ENCODE measurements at regions of chr11 and their contacts with region 1.

Region 1: DNA sequence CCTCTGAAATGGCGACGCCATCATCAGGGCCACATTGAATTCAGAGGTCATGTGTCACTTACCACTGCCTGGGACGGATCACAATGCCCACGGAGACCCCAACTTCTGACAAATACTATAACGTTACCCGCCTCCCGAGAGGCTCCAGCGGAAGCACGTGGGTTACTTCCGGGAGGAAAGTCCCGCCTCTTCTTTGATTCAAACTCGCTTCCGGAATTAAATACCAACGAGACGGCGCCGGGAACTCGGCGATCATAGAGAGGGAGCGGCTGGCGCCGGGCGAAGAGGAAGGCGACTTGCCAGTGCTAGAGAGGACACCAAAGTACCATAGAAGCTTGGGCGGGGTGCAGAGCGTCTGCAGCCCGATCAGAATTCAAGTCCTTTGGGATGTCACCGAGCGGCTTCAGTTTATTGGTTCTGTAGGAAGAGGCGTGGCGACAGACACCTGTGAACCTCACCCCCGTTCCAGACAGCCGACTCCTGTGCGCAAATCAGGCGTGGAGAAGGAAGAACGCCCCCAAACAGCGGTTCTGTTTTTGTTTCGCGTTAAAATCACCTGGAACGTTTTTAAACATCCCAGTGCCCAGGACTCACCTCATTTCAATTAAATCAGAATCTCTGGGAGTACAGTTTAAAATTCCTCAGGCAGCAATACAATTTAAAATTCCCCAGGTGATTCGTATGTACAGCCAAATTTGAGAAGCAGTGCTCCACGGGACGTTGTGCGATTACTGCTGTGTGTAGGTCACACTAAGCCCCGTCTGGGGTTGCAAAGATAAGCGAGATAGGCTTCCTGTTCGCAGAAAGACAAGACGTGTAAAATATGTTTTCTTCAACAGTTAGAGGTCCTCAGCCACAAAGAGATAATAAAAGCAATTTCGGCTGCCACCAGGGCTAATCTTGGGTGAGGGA is at the start of gene TIMM10:
- DNase-seq: peak; percentile 91
- H3K4me3 ChIP-seq: peak within 1 kb of the TSS; percentile 91
- H3K27me3 ChIP-seq: no peaks in the 10 kb centered on the region
- CTCF ChIP-seq: no peak
- polyA plus RNA-seq, gene TIMM10: 90.5 and 91.7 TPM in 2 replicates

Region 2: GRCh38 chr11:57345555-57346211 is 185.2 kb before region 1 on chr11:
- CTCF ChIA-PET with region 1: interaction called, 20 read pairs
- POLR2A ChIA-PET with region 1: no interaction called
- DNase-seq: no peak
- H3K4me3 ChIP-seq: no peak overlapping the region
- H3K27me3 ChIP-seq: no peaks in the 10 kb centered on the region; the same call in 1 of the 2 replicates
- CTCF ChIP-seq: peak; percentile 72

Region 3: DNA sequence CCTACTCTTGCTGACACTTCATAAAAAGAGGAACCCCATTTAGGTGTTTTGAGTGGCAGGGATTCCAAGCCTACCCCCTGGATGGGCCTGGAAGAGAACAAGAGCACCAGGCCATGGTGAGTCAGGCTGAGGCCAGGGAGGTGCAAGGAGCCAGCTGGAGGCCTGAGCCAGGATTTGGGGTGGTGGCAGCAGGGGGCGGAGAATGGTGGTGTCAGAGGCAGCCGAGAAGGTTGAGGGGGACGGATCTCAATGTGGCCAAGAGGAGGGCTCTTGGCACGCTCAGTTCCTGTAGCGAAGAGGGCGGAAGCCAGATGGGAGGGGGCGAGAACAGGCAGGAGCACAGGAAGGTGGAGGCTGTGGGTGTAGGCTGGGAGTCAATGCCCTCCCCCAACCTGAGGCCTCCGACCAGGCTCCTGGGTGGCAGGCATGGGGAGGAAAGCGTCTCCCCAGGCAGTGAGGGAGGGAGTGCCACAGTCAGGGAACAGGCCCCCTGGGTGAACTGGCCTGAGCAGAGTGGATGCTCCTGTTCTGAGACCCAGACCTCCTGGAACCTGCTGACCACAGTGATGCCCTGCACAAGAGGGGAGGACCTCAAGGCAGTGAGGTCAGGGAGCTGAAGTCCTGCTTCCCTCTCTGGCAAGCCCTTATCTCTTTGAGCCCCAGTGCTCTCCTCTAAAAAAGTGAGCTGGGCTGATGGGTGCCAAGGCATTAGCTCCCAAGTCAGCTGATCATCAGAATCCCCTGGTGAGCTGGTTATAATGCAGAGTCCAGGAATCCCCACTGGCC is 56.6 kb before region 1 on chr11:
- CTCF ChIA-PET with region 1: interaction called, 14 read pairs
- POLR2A ChIA-PET with region 1: no interaction called
- DNase-seq: no peak
- H3K4me3 ChIP-seq: no peak overlapping the region
- H3K27me3 ChIP-seq: peaks cover 10% of the 10 kb centered on the region
- CTCF ChIP-seq: no peak

Region 4: GRCh38 chr11:57480409-57481137 is 50.3 kb before region 1 on chr11:
- CTCF ChIA-PET with region 1: interaction called, 35 read pairs
- POLR2A ChIA-PET with region 1: no interaction called
- DNase-seq: no peak
- H3K4me3 ChIP-seq: no peak overlapping the region
- H3K27me3 ChIP-seq: peaks cover 14% of the 10 kb centered on the region
- CTCF ChIP-seq: peak; percentile 75

Region 5: GRCh38 chr11:57493507-57494503 is 37.0 kb before region 1 on chr11:
- CTCF ChIA-PET with region 1: interaction called, 182 read pairs
- POLR2A ChIA-PET with region 1: no interaction called
- DNase-seq: no peak
- H3K4me3 ChIP-seq: no peak overlapping the region
- H3K27me3 ChIP-seq: no peaks in the 10 kb centered on the region
- CTCF ChIP-seq: peak; percentile 89

Region 6: DNA sequence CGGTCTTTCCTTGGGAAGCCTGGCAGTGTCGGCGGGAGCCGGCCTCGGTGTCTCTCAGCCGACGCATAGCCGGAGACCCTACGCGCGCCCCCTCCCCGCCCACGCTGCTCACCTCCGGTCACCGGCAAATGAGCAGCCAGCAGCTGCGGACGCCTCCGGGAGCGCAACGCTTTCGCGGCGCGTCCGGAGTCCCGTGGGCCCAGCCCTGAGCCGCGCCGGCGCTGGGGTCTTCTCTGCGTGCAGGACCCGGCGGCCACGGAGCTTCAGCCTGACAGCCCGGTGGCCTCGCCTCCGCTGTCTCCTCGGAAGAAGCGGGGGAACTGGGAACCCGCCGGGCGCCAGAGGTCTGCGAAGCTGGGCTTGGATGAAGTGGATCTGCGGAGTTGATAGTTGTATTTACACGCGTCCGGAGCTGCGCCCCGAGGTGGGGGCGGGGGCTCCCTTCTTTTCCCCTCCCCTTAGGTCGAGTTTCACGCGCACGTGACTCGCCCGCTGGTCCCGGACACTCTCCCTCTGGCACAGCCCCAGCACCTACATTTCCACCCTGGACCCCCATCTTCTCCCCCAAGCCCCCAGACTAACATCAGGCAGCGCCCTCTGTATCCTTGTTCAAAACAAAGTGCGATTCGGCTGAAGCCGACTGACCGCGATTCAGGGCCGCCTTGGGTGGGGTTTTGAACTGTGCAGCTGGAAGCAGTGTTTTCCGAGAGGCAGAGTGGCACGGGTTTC is 15.4 kb before region 1 on chr11 and contains the start of gene SLC43A1:
- CTCF ChIA-PET with region 1: interaction called, 59 read pairs
- POLR2A ChIA-PET with region 1: no interaction called
- DNase-seq: no peak
- H3K4me3 ChIP-seq: peak within 1 kb of the TSS; percentile 79
- H3K27me3 ChIP-seq: no peaks in the 10 kb centered on the region
- CTCF ChIP-seq: no peak; the same call in 1 of the 2 replicates
- polyA plus RNA-seq, gene SLC43A1: 11.8 and 23.4 TPM in 2 replicates